Gastrocnemius medialis (tissue), 4 donors: ENCODE measurements at regions of chr5 and their contacts with region 1.

Region 1: DNA sequence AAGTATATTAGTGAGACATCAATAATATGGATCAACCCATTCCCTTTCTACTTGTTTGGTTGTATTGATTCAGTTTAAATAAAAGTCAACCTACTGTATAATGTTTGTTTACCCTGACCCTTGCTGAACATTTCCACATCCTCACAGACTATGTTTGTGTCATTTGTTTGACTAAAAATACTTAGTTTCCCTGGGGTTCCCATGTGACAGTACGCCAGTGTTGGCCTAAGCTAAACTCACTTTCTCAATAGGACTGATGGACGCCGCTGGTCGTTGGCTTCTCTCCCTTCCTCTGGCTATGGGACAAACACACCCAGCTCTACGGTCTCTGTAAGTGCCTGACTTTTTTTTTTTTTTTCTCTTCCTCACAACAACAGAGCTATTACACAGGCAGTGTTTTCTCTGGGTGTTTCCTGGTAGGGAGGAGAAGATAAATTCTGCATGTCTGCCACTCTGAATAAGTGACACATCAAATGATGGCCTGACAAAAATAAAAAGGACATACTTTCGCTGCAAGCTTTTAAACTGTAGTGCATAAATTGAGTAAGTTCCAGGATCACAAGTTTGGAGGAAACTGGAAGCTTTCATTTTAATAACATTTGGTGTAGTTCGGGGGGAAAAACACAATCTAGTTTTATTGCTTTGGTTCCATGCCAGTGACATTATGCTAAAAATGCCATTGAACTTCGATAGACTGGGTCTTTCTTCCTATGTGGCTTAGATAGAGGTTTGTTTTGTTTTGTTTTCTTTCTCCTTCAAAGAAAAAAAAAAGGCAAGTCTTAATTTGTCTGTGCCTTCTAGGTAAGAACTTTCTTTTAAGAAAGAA is 101.0 kb downstream of the CD180 start:
- DNase-seq: peak; percentile 69 to 89
- ATAC-seq: peak; percentile 93 to 96
- H3K4me3 ChIP-seq: peak overlapping the region in 3 of 4 donors; percentile 0 to 22 (median 15)
- H3K27ac ChIP-seq: peak overlapping the region; percentile 70 to 83 (median 75)
- H3K4me1 ChIP-seq: peaks cover 33 to 41% of the 10 kb centered on the region in 2 donors
- H3K27me3 ChIP-seq: no peaks in the 10 kb centered on the region
- CTCF ChIP-seq: no peak
- POLR2A ChIP-seq: no peak

Region 2: DNA sequence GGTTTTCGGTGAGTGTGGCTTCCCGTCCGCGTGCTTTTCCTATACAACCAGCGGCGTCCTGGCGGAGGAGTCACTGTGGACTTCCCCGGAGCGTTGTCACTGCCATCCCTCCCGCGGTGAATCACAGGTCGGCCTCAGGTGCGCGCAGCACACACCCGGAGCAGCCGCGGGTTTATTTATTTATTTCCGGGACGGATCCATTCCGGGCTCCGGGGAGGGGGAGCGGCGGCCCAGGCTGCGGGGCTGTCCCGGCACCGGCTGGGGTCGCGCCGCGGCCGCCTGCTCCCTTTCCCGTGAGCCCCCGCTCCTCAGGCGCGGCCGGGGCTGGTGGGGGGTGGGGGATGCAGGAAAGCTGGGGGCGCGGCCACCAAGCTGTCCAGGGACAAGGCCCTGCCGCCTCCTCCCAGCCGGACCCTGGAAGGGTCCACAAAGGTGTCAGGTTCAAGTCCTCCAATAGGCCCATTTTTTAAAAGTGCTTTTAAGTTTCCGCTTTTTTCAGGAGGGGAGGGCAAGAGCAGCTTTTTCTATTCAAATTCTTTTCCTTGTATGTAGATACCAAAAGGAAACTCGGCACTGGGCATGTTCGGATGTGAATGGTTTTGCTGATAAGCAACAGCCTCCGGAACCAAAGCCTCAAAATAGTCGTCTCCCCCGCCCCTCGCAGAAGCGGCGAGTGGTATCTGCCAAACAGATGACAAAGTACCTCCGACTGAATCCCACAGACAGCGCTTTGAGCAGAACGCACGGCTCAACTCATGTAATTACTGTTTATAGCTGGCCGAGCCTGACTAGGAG is 91.4 kb before region 1 on chr5:
- in situ Hi-C with region 1: loop called in 1 of 4 experiments (anchors 25 kb)
- intact Hi-C with region 1: loop called (anchors 2 kb)
- DNase-seq: peak; percentile 75 to 87
- ATAC-seq: peak; percentile 83 to 87
- H3K4me3 ChIP-seq: peak overlapping the region; percentile 58 to 82 (median 74)
- H3K27ac ChIP-seq: peak overlapping the region; percentile 85 to 95 (median 91)
- H3K4me1 ChIP-seq: peaks cover 12 to 46% of the 10 kb centered on the region in 2 donors
- H3K27me3 ChIP-seq: no peaks in the 10 kb centered on the region
- CTCF ChIP-seq: no peak
- POLR2A ChIP-seq: peak; percentile 61 to 87

Region 3: GRCh38 chr5:67050136-67050535 is 45.4 kb before region 1 on chr5:
- in situ Hi-C with region 1: no loop called
- intact Hi-C with region 1: loop called (anchors 5 kb)
- DNase-seq: peak in 1 of 2 donors; percentile 63
- ATAC-seq: peak; percentile 43 to 85
- H3K4me3 ChIP-seq: no peak overlapping the region
- H3K27ac ChIP-seq: peak overlapping the region; percentile 32 to 70 (median 64)
- H3K4me1 ChIP-seq: peaks cover 34 to 36% of the 10 kb centered on the region in 2 donors
- H3K27me3 ChIP-seq: no peaks in the 10 kb centered on the region
- CTCF ChIP-seq: no peak
- POLR2A ChIP-seq: no peak

Region 4: GRCh38 chr5:67156976-67157583 is 61.5 kb after region 1 on chr5:
- in situ Hi-C with region 1: no loop called
- intact Hi-C with region 1: loop called (anchors 5 kb)
- DNase-seq: no peak
- ATAC-seq: no peak
- H3K4me3 ChIP-seq: no peak overlapping the region
- H3K27ac ChIP-seq: no peak overlapping the region
- H3K4me1 ChIP-seq: peaks cover 17 to 19% of the 10 kb centered on the region in 2 donors
- H3K27me3 ChIP-seq: no peaks in the 10 kb centered on the region
- CTCF ChIP-seq: peak; percentile 66 to 75 (median 69)
- POLR2A ChIP-seq: no peak